Right ventricle myocardium superior (tissue), 1 donor: ENCODE measurements at regions of chr10 and their contacts with region 1.

Region 1: GRCh38 chr10:5813287-5814109 is at the start of gene GDI2:
- DNase-seq: peak; percentile 97
- ATAC-seq: peak; percentile 98
- total RNA-seq, gene GDI2: 101 TPM

Region 2: GRCh38 chr10:5737352-5737751 is 76.1 kb before region 1 on chr10:
- intact Hi-C with region 1: no loop called
- DNase-seq: no peak
- ATAC-seq: no peak

Region 3: DNA sequence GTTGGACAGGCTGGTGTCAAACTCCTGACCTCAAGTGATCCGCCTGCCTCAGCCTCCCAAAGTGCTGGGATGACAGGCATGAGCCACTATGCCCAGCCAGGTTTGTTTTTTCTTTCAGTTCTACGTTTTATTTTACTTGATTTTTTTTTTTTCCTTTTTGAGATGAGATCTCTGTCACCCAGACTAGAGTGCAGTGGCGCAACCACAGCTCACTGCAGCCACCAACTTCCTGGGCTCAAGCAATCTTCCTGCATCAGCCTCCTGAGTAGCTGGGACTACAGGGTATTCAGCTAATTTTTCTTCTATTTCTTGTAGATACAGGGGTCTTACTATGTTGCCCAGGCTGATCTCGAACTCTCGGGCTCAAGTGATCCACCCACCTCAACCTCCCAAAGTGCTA is 24.5 kb before region 1 on chr10:
- intact Hi-C with region 1: no loop called
- DNase-seq: no peak
- ATAC-seq: no peak

Region 4: GRCh38 chr10:5889624-5890451 is 76.3 kb after region 1 on chr10 and contains the starts of genes ANKRD16 and FBH1:
- intact Hi-C with region 1: loop called (anchors 5 kb)
- DNase-seq: peak; percentile 99
- ATAC-seq: peak; percentile 95
- total RNA-seq, gene ANKRD16: 2.4 TPM
- total RNA-seq, gene FBH1: 83.0 TPM

Region 5: GRCh38 chr10:5932345-5932744 is 118.8 kb after region 1 on chr10:
- intact Hi-C with region 1: no loop called
- DNase-seq: no peak
- ATAC-seq: no peak